ENCODE measurements at regions of chr11 and their contacts with region 1.

Region 1: GRCh38 chr11:47176328-47177228 is at the start of gene ARFGAP2:
- DNase-seq: peak; percentile 95
- H3K4me3 Mint-ChIP-seq: peak within 1 kb of the TSS; percentile 97
- H3K27ac Mint-ChIP-seq: peak within 1 kb of the TSS; percentile 100
- H3K4me1 Mint-ChIP-seq: peaks cover 28% of the 10 kb centered on the region
- H3K27me3 Mint-ChIP-seq: no peaks in the 10 kb centered on the region
- total RNA-seq, gene ARFGAP2: 98.6 and 104 TPM in 2 replicates

Region 2: DNA sequence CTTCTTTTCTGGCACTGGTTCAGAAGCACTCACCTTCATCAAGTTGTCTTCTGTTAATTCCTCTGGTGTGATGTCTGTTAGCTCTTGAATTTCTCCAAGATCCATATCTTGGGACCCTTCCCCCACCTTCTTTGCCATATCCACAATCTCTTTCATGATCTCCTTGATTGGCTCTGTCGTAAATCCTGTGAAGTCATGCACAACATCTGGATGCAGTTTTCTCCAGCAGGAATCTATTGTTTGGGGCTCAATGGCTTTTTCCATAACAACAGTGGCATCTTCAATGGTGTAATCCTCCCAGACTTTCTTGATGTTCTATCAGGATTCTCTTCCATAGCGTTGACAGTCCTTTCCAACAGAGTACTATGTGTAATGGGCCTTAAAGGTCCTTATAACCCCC is 143.1 kb before region 1 on chr11:
- intact Hi-C with region 1: no loop called
- DNase-seq: no peak
- H3K4me3 Mint-ChIP-seq: no peak overlapping the region
- H3K27ac Mint-ChIP-seq: no peak overlapping the region
- H3K4me1 Mint-ChIP-seq: no peaks in the 10 kb centered on the region
- H3K27me3 Mint-ChIP-seq: no peaks in the 10 kb centered on the region

Region 3: DNA sequence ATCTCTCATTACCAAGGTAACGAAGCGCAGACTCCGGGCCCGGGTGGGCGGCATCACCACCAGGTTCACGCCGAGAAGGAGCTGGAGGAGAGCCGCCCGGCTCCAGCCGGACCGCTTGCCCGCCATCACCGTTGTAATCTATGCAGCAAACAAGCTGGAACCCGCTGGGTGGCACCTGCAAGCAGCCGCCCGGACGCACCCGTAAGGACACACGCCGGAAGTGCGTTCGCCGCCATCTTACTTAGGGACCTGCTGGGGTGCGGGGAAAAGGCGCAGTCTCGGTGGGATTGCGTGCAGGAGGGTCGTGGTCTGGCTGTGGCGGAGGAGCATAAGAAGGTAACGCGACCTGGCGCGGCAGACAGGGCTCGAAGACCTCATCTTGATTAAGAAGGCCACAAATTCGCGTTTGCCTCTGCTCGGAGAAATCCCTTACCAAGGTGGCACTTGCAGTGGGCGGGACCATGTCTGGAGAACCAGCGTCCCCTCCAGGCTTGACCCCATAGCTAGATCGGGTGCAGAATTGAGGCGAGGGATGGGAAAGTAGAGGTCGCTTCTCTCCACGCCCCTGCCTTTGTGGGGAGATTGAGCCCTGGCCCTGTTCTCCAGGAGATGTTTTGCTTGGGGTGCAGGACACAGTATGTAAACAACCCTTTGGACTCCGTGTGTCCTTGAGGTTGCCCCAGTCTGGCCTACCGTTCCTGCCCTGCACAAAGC is 72.2 kb after region 1 on chr11 and contains the start of gene ACP2:
- intact Hi-C with region 1: loop called (anchors 1 kb)
- DNase-seq: peak; percentile 85
- H3K4me3 Mint-ChIP-seq: peak within 1 kb of the TSS; percentile 98
- H3K27ac Mint-ChIP-seq: peak within 1 kb of the TSS; percentile 96
- H3K4me1 Mint-ChIP-seq: peaks cover 14% of the 10 kb centered on the region
- H3K27me3 Mint-ChIP-seq: no peaks in the 10 kb centered on the region
- total RNA-seq, gene ACP2: 23.2 and 24.5 TPM in 2 replicates

Region 4: GRCh38 chr11:47348859-47349258 is 172.3 kb after region 1 on chr11:
- intact Hi-C with region 1: no loop called
- DNase-seq: no peak
- H3K4me3 Mint-ChIP-seq: no peak overlapping the region
- H3K27ac Mint-ChIP-seq: no peak overlapping the region
- H3K4me1 Mint-ChIP-seq: no peaks in the 10 kb centered on the region
- H3K27me3 Mint-ChIP-seq: no peaks in the 10 kb centered on the region

Region 5: GRCh38 chr11:47407746-47408590 is 231.4 kb after region 1 on chr11 and contains the start of gene SLC39A13:
- intact Hi-C with region 1: loop called (anchors 5 kb)
- DNase-seq: peak; percentile 93
- H3K4me3 Mint-ChIP-seq: peak within 1 kb of the TSS; percentile 96
- H3K27ac Mint-ChIP-seq: peak within 1 kb of the TSS; percentile 89
- H3K4me1 Mint-ChIP-seq: peaks cover 17% of the 10 kb centered on the region
- H3K27me3 Mint-ChIP-seq: no peaks in the 10 kb centered on the region
- total RNA-seq, gene SLC39A13: 12.5 and 15.2 TPM in 2 replicates